Dendritic cell treated with granulocyte-macrophage colony-stimulating factor and Interleukin-4, amounts not matched to agents 40 ng/mL and 50 ng/mL, for 4 days (primary cell): ENCODE measurements at regions of chr2 and their contacts with region 1.

Region 1: GRCh38 chr2:30711646-30712085 is 95.6 kb downstream of the CAPN13 start:
- H3K4me3 Mint-ChIP-seq: no peak overlapping the region
- H3K27ac Mint-ChIP-seq: no peak overlapping the region
- H3K4me1 Mint-ChIP-seq: peaks cover 17% of the 10 kb centered on the region
- H3K27me3 Mint-ChIP-seq: peaks cover 1% of the 10 kb centered on the region

Region 2: DNA sequence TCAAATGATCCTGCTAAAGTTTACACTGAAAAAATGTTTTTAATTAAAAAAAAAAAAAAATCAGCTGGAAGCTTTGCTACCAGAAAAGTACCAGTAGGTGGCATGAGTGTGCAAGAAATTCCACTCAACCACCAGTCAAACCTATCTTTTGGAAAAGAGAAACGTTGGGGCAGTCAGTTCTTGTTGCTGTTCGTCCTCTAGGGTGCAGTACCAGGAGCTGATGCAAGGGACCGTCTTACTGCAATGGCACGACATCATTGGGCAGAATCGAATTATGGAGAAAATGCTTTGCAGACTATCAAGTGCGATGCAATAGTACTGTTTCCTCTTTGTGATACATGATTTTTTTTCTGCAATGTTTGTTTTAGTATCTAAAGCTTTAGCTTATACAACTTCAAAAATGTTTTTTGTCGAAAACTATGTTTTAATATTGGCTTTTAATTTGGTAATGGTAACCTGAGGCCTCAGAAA is 546.6 kb before region 1 on chr2:
- intact Hi-C with region 1: loop called (anchors 1 kb)
- H3K4me3 Mint-ChIP-seq: no peak overlapping the region
- H3K27ac Mint-ChIP-seq: no peak overlapping the region
- H3K4me1 Mint-ChIP-seq: no peaks in the 10 kb centered on the region
- H3K27me3 Mint-ChIP-seq: no peaks in the 10 kb centered on the region

Region 3: DNA sequence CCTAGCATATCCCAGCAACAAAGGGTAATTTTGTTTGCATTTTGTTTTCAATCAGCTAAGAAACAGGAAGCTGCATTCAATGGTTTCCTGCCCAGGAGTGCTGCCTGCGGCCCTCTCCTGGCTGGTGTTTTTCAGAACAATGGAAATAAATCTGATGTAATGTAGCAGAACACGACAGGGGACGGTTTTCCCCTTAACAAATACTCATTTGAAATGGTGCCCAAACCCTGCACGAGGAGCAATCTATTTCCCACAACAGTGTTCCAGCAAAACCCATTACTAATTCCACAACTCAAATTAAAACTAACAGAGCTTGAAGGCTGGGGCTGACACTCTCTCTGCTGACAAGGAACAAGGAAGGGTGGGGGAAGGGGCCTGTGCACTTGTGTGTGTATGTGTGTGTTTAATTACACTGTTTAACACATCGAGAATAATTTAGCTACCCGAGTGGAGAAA is 86.9 kb after region 1 on chr2:
- intact Hi-C with region 1: loop called (anchors 10 kb)
- H3K4me3 Mint-ChIP-seq: no peak overlapping the region
- H3K27ac Mint-ChIP-seq: no peak overlapping the region
- H3K4me1 Mint-ChIP-seq: peaks cover 18% of the 10 kb centered on the region
- H3K27me3 Mint-ChIP-seq: peaks cover 70% of the 10 kb centered on the region

Region 4: DNA sequence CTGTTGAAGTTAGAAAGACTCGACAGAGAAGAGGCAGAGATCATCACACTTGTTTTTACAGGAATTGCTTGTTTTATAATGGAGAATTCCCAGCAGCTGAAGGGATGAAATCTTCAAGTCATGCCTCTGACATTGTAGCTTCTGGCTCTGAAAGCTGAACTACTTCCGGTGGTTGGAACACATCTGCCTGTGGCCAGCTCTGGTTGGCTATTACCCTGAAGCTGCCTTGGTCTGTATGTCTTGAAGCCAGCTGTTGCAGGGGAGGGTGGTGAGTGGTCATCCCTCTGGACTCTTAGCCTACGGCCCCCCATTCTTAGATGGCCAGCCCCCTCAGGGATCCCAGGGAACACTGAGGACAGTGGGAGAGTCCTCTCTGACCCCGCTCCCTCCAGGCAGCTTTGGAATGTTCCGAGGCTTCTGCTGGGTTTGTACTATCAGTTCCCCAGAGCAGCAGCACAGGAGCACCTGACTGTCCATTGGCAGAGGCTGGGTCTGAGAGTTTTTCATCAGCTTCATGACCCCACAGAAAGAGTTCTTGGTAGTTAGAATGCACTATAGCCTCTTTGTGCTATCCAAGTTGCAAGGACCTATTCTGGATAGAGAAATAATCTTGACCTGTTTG is 182.9 kb after region 1 on chr2:
- intact Hi-C with region 1: no loop called
- H3K4me3 Mint-ChIP-seq: no peak overlapping the region
- H3K27ac Mint-ChIP-seq: no peak overlapping the region
- H3K4me1 Mint-ChIP-seq: no peaks in the 10 kb centered on the region
- H3K27me3 Mint-ChIP-seq: peaks cover 2% of the 10 kb centered on the region

Region 5: GRCh38 chr2:31170071-31170698 is 458.5 kb after region 1 on chr2:
- intact Hi-C with region 1: loop called (anchors 1 kb)
- H3K4me3 Mint-ChIP-seq: no peak overlapping the region
- H3K27ac Mint-ChIP-seq: no peak overlapping the region
- H3K4me1 Mint-ChIP-seq: peaks cover 6% of the 10 kb centered on the region
- H3K27me3 Mint-ChIP-seq: peaks cover 6% of the 10 kb centered on the region

Region 6: DNA sequence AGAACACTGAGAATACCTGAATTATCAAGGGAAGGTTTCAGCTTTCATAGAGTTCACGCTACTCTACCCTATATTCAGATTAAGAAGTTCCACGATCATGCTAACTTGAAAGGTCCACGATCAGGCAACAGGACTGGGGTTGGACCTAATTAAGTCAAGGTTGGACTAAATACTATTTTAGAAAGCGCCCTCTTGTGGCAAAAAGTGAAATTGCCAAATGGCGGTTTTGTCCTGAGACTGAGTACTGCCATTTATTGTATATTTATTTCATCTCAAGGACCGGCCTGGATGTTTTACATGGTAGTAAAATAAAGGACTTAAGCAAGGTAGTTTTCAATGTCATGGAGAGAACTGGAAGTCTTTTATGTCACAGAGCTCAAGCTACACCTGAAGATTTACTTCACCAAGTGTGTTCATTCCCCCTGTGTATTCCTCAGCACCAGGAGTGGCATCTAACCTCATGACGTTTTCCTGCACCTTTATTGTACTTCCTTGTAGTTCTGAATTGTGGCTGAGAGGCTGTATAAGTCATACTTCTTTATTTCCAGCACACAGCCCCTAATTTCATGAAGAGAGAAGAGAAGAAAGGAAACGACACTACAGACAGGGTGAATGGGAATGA is 812.3 kb after region 1 on chr2:
- intact Hi-C with region 1: loop called (anchors 2 kb)
- H3K4me3 Mint-ChIP-seq: no peak overlapping the region
- H3K27ac Mint-ChIP-seq: no peak overlapping the region
- H3K4me1 Mint-ChIP-seq: no peaks in the 10 kb centered on the region
- H3K27me3 Mint-ChIP-seq: peaks cover 5% of the 10 kb centered on the region